Uterus (tissue), 4 donors: ENCODE measurements at regions of chr22 and their contacts with region 1.

Region 1: DNA sequence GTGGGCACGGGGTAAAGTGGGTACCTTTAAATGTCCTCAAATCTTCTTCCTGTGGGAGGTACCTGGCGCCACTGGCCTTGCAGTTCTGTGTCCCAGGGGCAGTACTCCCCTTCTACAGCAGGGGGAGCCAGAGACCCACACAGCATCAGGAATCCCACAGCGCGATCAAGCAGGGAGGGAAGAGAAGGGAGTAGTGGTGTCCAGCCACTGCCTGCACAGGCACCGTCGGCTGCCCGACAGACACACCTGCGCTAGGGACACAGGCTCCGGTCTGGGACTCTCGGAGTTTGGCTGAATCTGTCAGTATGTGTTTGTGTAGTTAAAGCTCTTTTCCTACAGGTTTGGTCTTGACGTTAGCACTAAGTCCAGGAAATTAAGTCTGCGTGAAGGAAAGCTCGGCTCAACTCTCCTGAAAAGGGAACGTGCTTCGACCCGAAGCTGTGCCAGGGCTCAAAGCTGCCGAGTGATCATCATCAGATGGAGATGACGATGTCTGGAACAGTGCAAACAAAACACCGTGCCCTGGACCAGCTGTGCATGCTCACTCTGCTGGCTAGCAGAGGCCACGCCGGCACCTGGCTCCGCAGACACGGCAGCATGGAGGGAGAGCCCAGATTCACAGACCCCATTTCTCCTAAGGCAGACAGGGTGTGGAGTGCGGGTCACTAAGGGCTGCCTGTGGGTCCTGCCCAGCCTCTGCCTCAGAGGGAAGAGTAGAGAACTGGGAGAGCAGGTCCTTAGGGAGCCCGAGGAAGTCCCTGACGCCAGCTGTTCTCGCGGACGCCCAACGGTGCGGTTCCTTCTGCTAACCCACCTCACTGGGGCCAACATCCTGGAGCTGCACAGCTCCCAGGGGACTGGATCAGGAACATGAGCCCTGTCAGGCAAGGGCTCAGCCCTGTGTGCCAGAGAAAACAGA is 56.0 kb upstream of the BID start:
- DNase-seq: peak; percentile 89 to 92
- H3K4me3 ChIP-seq: no peak overlapping the region
- H3K27ac ChIP-seq: peak overlapping the region; percentile 81 to 95
- H3K4me1 ChIP-seq: no peaks in the 10 kb centered on the region
- H3K27me3 ChIP-seq: no peaks in the 10 kb centered on the region
- CTCF ChIP-seq: peak; percentile 99 to 100 (median 99)
- POLR2A ChIP-seq: no peak

Region 2: GRCh38 chr22:17678872-17679271 is 151.4 kb before region 1 on chr22:
- intact Hi-C with region 1: no loop called
- DNase-seq: no peak
- H3K4me3 ChIP-seq: no peak overlapping the region
- H3K27ac ChIP-seq: no peak overlapping the region
- H3K4me1 ChIP-seq: no peaks in the 10 kb centered on the region
- H3K27me3 ChIP-seq: no peaks in the 10 kb centered on the region
- CTCF ChIP-seq: no peak
- POLR2A ChIP-seq: no peak

Region 3: GRCh38 chr22:17773606-17774205 is 56.6 kb before region 1 on chr22:
- intact Hi-C with region 1: no loop called
- DNase-seq: peak in 1 of 2 donors; percentile 30
- H3K4me3 ChIP-seq: peak overlapping the region; percentile 36 to 63
- H3K27ac ChIP-seq: peak overlapping the region in 1 of 2 donors; percentile 31
- H3K4me1 ChIP-seq: no peaks in the 10 kb centered on the region
- H3K27me3 ChIP-seq: no peaks in the 10 kb centered on the region
- CTCF ChIP-seq: no peak
- POLR2A ChIP-seq: no peak

Region 4: GRCh38 chr22:17891481-17892167 is 61.3 kb after region 1 on chr22:
- intact Hi-C with region 1: loop called (anchors 10 kb)
- DNase-seq: no peak
- H3K4me3 ChIP-seq: no peak overlapping the region
- H3K27ac ChIP-seq: peak overlapping the region; percentile 40 to 58
- H3K4me1 ChIP-seq: no peaks in the 10 kb centered on the region
- H3K27me3 ChIP-seq: no peaks in the 10 kb centered on the region
- CTCF ChIP-seq: peak; percentile 20 to 40 (median 36)
- POLR2A ChIP-seq: no peak

Region 5: GRCh38 chr22:18077639-18078328 is 247.5 kb after region 1 on chr22 and contains the start of gene PEX26:
- intact Hi-C with region 1: loop called (anchors 2 kb)
- DNase-seq: peak; percentile 92 to 93
- H3K4me3 ChIP-seq: peak within 1 kb of the TSS; percentile 66 to 75
- H3K27ac ChIP-seq: peak within 1 kb of the TSS; percentile 72 to 82
- H3K4me1 ChIP-seq: peaks cover 7 to 14% of the 10 kb centered on the region in 2 donors
- H3K27me3 ChIP-seq: no peaks in the 10 kb centered on the region
- CTCF ChIP-seq: peak in 1 of 4 experiments; percentile 28
- POLR2A ChIP-seq: peak; percentile 45 to 63
- total RNA-seq, gene PEX26: 28.2 to 36.1 (median 31.2) TPM